Gastrocnemius medialis (tissue), 4 donors: ENCODE measurements at regions of chr10 and their contacts with region 1.

Region 1: DNA sequence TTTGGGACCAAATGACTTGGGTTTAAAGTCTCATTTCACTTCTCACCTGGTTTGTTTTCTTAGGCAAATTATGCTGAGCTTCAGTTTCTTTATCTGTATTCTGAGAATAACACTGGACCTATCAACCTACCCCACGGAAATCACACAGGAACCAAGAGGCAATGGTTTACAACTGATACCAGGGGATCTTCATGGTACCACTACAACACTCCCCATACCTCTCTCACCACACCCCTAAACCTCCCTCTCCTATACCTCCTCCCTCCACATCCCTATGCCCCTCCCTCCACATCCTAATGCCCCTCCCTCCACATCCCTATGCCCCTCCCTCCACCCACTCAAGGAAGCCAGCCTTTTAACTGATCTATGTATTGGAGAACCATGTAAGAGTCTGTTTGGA is 9.9 kb downstream of the FAM204A start:
- DNase-seq: no peak
- ATAC-seq: no peak
- H3K4me3 ChIP-seq: no peak overlapping the region
- H3K27ac ChIP-seq: no peak overlapping the region
- H3K4me1 ChIP-seq: peaks cover 2 to 10% of the 10 kb centered on the region in 2 donors
- H3K27me3 ChIP-seq: no peaks in the 10 kb centered on the region
- CTCF ChIP-seq: no peak
- POLR2A ChIP-seq: no peak

Region 2: DNA sequence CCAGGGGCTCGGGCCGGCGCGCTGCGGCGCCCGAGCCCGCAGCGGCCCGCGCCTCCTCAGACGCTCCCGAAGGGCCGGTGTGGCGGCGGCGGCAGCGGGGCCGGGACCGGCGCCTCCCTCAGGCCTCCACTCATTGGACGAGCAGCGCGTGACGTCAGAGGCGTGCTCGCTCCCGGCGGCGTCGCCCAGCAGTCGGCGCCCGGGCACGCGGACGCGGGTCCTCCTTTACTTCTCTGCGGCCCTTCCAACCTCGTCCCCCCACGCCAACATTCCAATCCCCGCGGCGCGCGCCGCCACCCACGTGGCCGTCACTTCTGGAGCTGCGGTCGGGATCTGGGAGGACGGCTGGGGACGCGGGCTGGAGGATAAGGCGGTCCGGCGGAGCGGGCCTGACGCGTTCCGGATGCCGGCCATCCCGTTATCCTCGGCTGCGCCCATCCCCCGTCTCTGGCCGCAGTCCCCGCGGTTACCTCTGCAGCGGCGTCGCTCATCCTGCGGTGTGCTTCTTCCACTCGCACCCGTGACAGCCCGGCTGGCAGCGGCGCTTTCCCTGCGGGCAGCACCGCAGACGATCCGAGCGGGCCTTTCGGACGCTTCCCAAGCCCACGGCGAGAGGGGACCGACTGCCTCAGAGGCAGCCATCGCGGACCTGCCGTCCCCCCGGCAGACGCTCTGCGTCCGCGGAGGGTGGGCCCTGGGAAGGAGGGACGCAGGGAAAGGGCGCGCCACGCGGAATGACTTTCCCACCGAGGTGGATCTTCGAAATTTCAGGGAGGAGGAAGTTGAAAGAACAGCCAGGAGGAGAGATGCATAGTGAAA is 956.7 kb before region 1 on chr10 and contains the start of gene PDZD8:
- in situ Hi-C with region 1: no loop called
- intact Hi-C with region 1: loop called (anchors 10 kb)
- DNase-seq: peak; percentile 87 to 89
- ATAC-seq: peak; percentile 90 to 91
- H3K4me3 ChIP-seq: peak within 1 kb of the TSS; percentile 84 to 96 (median 95)
- H3K27ac ChIP-seq: peak within 1 kb of the TSS; percentile 87 to 94 (median 92)
- H3K4me1 ChIP-seq: peaks cover 29 to 31% of the 10 kb centered on the region in 2 donors
- H3K27me3 ChIP-seq: peaks cover 0 to 2% (median 0%) of the 10 kb centered on the region in 3 donors
- CTCF ChIP-seq: peak in 1 of 5 experiments; percentile 12
- POLR2A ChIP-seq: peak; percentile 90 to 94
- total RNA-seq, gene PDZD8: 15.9 to 25.0 (median 18.1) TPM

Region 3: DNA sequence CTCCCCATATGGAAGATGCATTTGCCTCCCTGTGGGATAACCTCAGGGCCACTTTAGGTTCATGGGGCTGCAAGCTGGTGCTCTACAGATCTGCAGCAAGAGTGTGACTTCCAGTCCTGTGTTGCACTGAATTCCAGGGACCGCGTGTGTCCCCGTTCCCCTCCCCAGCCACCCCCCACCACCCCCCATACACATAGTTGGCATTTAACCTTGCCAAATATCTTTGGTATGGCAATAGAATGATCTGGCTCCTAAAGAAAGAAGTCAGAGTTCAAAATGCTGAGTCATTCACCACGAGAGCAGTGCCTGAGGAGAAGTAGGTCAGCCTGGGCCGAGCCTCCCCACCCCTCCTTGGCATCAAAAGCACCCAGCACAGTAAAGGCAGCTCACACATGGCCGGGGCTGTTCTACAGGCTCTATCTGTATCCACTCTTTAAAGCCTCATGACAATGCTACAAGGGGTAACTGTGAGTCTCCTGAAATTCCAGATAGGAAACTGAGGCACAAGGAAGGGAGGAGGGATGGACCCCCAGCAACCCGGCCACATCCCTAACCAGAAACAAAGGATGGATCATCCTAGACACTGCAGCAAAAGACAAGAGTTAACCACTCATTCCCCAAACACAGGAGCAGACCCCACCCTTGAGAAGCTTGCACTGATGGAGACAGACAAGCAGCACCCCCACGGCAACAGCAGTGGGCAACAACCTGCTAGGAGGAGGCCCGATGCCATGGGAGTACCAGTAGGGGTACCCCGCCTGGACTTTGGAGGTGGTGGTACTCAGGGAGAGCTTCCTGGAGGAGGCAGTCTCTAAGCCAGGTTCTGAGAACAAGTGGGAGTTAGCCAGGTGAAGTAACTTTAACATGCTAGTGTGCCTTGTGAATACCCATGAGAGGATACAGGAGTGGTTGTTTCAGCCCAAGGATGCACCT is 627.0 kb after region 1 on chr10:
- in situ Hi-C with region 1: no loop called
- intact Hi-C with region 1: loop called (anchors 10 kb)
- DNase-seq: peak; percentile 74 to 84
- ATAC-seq: peak; percentile 91 to 96
- H3K4me3 ChIP-seq: no peak overlapping the region
- H3K27ac ChIP-seq: peak overlapping the region; percentile 49 to 82 (median 68)
- H3K4me1 ChIP-seq: peaks cover 17 to 28% of the 10 kb centered on the region in 2 donors
- H3K27me3 ChIP-seq: no peaks in the 10 kb centered on the region
- CTCF ChIP-seq: no peak
- POLR2A ChIP-seq: no peak